ENCODE measurements at regions of chr5 and their contacts with region 1.

Region 1: DNA sequence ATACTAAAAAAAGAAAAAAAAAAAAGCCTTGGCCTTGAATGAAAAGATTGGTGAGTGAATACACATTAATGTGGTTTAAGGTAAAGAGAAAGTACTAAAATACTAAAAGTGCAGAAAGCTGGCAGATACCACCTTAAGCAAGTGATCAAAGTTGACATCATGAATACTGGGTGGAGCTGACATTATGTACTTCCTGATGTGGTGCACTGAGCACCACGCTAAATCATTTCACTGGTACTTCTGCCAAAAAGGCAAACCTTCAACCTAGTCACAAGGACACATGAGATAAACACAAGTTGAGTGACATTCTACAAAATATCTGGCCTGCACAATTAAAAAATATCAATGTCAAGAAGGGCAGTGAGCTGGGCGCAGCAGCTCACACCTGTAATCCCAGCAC is 33.8 kb upstream of the PANK3 start:
- DNase-seq: peak; percentile 15
- ATAC-seq: peak; percentile 69
- H3K4me3 ChIP-seq: no peak overlapping the region
- H3K27ac ChIP-seq: no peak overlapping the region
- H3K4me1 ChIP-seq: 0 out of 2 replicates have a peak, but pooled peaks cover 5% of the 10 kb centered on the region
- H3K27me3 ChIP-seq: no peaks in the 10 kb centered on the region
- CTCF ChIP-seq: no peak

Region 2: DNA sequence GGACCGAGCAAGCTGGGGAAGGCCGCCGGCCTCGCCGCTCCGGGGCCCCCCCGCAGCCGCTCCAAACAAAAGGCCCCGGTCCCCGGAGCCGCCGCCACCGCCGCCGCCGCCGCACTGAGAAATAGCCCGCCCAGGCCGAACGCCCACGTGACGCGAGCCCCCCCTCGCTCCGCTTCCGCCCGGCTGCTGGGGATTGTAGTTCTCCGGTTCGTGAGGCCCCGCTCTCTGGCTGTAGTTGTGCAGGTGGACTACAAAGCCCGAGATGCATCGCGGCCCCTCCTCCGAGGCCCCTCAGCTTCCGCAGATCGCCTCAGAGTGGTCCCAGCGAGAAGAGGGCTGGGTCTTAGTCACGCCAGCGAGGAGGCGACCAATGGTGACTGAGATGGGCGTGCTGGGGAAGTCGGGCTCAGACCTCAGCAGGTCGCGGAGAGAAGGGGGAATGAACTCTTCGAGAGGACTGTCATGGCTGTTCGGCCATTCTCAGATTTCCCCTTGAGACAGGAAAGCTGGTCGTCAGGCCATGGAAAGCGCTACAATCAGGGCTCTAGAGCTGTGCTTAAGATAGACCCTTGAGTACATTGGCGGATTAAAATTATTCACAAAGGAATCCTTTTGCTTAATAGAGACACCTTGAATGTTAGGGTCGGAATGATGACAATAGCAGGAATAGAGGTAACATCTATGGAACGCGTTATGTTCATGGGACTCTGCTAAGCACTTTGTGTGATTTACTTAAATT is 33.3 kb before region 1 on chr5:
- CTCF ChIA-PET with region 1: no interaction called
- POLR2A ChIA-PET with region 1: no interaction called
- intact Hi-C with region 1: loop called (anchors 1 kb)
- DNase-seq: peak; percentile 94
- ATAC-seq: peak; percentile 96
- H3K4me3 ChIP-seq: peak overlapping the region; percentile 97
- H3K27ac ChIP-seq: peak overlapping the region; percentile 74
- H3K4me1 ChIP-seq: peaks cover 17% of the 10 kb centered on the region
- H3K27me3 ChIP-seq: no peaks in the 10 kb centered on the region
- CTCF ChIP-seq: no peak

Region 3: DNA sequence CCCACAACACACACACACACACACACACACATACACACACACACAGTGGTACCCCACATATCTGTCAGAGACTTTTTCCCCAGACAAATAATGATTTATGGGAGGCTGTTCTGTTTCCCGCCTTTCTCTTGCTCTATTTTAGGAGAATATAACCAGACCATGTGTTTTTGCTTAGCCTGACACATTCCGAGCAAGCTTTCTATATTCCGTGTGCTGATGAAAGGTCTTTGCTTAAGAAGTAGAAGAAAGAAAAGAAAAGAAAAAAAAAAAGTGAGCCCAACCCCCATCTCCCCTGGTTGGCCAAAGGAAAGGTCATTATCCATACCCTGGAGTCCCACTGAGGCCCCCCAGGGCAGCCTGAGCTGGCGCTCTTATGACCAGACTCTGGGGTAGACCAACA is 349.3 kb after region 1 on chr5:
- CTCF ChIA-PET with region 1: no interaction called
- POLR2A ChIA-PET with region 1: no interaction called
- intact Hi-C with region 1: no loop called
- DNase-seq: no peak
- ATAC-seq: no peak
- H3K4me3 ChIP-seq: no peak overlapping the region
- H3K27ac ChIP-seq: no peak overlapping the region
- H3K4me1 ChIP-seq: no peaks in the 10 kb centered on the region
- H3K27me3 ChIP-seq: peaks cover 26% of the 10 kb centered on the region
- CTCF ChIP-seq: no peak